ENCODE measurements at regions of chr3 and their contacts with region 1.

Region 1: DNA sequence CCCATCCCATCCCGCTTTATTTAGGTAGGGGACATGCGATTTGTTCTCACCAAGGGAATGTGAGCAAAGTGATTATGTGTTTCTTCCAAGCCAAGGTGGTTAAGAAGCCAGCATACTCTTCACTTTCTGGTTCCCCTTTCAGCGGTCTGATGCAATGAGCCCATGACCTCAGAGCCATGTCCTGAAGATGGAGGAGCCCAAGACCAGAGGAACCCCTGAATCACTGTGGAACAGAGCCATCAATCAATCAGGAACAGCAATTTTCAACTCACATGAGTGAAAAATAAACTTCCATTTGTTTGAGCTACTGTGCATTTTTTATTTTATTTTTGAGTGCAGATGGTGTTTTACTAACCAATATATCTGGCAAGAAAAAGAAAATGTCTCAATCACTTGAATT is 10.8 kb downstream of the THRB start:
- DNase-seq: no peak
- CTCF ChIP-seq: no peak

Region 2: DNA sequence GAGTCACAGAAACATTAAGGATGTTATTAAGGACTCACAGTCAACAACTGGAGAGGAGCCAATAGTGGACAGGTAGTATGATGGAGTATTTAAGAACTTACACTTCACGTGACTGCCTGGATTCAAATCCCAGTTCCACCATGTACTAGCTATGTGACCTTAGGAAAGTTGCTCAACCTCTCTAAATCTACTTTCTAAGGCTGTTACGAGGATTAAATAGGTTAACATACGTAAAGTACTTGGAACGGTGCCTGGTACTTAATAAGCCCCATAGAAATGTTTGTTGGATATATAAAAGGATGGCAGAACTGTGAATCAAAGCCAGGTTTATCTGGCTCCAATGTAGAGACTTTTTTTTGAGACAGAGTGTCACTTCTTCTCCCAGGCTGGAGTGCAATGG is 13.6 kb before region 1 on chr3:
- CTCF ChIA-PET with region 1: interaction called, 12 read pairs
- POLR2A ChIA-PET with region 1: no interaction called
- DNase-seq: no peak
- CTCF ChIP-seq: no peak

Region 3: GRCh38 chr3:24508423-24508839 is 24.6 kb after region 1 on chr3:
- CTCF ChIA-PET with region 1: no interaction called
- POLR2A ChIA-PET with region 1: no interaction called
- DNase-seq: no peak
- CTCF ChIP-seq: no peak